IMR-90 (cell line): ENCODE measurements at regions of chr1 and their contacts with region 1.

Region 1: GRCh38 chr1:154442006-154442740 is 37.0 kb downstream of the IL6R start:
- DNase-seq: peak; percentile 64
- ATAC-seq: peak; percentile 5; the same call in 1 of the 2 replicates
- H3K4me3 ChIP-seq: no peak overlapping the region
- H3K27ac ChIP-seq: no peak overlapping the region
- H3K4me1 ChIP-seq: peaks cover 23% of the 10 kb centered on the region
- H3K27me3 ChIP-seq: peaks cover 17% of the 10 kb centered on the region
- CTCF ChIP-seq: 0 out of 2 replicates have a peak, but pooled peaks have one; percentile 22
- POLR2A ChIP-seq: no peak
- RAD21 ChIP-seq: no peak

Region 2: DNA sequence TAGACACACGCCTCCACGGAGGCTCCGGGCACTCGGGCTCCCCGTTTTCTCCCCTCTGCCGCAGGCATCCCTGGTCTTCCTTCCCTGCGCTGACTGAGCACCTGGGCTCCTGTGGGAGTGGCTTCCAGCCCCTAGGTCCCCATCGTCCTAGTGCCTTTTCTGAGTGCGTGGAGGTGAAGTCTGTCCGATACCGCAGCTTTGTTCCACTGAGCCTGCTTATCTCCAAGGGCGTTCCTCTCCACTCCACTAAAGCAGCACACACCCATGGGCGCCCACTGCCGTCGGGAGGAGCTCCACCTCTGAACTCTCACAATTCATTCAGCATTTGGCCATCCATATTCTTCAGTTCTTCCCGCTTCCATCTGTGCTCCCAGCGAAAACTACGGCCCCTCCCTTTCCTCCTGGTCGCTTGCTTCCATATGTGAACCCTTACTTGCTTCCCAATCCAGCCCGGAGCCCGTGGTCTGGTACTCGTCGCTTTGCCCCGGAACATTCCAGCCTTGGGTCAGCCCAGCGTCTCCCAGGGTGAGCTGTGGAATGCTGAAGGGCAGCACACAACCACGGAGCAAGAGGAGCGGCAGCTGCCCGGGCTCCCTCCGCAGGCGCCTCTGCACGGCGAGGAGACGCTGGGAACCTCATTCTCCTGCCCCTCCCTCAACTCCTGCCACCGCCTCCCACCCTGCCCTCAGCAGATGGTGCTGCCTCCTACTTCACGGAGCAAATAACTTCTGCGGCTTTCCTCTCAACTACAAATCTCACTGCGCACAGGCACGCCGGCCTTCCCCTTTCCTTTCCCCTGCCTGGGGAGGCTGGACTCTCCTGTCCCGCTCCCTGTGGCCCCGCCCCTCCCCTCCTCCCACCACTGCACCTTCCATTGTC is 89.4 kb before region 1 on chr1:
- CTCF ChIA-PET with region 1: no interaction called
- POLR2A ChIA-PET with region 1: no interaction called
- dilution Hi-C with region 1: no loop called
- in situ Hi-C with region 1: no loop called
- intact Hi-C with region 1: loop called (anchors 5 kb)
- DNase-seq: peak; percentile 31
- ATAC-seq: peak; percentile 78
- H3K4me3 ChIP-seq: peak overlapping the region; percentile 4; the same call in 1 of the 2 replicates
- H3K27ac ChIP-seq: peak overlapping the region; percentile 26; the same call in 1 of the 2 replicates
- H3K4me1 ChIP-seq: peaks cover 10% of the 10 kb centered on the region; the same call in 1 of the 2 replicates
- H3K27me3 ChIP-seq: peaks cover 2% of the 10 kb centered on the region
- CTCF ChIP-seq: no peak
- POLR2A ChIP-seq: no peak
- RAD21 ChIP-seq: no peak

Region 3: GRCh38 chr1:154431586-154432373 is 10.4 kb before region 1 on chr1:
- CTCF ChIA-PET with region 1: no interaction called
- POLR2A ChIA-PET with region 1: no interaction called
- dilution Hi-C with region 1: no loop called
- in situ Hi-C with region 1: no loop called
- intact Hi-C with region 1: loop called (anchors 1 kb)
- DNase-seq: peak; percentile 99
- ATAC-seq: peak; percentile 85
- H3K4me3 ChIP-seq: no peak overlapping the region
- H3K27ac ChIP-seq: peak overlapping the region; percentile 4; the same call in 1 of the 2 replicates
- H3K4me1 ChIP-seq: peaks cover 26% of the 10 kb centered on the region
- H3K27me3 ChIP-seq: 0 out of 2 replicates have a peak, but pooled peaks cover 4% of the 10 kb centered on the region
- CTCF ChIP-seq: no peak
- POLR2A ChIP-seq: no peak
- RAD21 ChIP-seq: peak; percentile 15; the same call in 1 of the 2 replicates

Region 4: DNA sequence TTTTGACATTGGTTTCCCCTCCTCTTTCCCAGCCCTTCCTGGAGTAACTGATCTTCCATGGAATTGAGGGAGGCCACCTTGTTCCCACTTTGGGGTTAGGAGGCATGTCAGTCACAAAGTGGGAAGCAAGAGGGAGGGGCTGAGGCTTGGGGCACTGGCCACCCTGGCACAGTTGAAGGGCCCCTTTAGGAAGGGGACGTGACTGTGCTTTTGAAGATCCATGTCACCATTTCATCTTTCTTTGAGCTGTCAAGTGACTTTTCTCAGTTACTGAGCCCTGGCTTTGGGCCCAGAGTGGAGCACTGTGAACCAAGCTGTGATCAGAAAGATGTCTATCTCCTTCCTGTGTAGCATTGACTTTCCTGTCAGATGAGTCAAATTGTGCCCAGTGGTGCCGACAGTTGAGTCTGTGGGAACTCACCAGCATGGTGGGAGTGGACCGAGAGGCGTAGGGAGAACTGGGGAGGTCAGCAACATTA is 21.4 kb after region 1 on chr1:
- CTCF ChIA-PET with region 1: interaction called, 4 read pairs
- POLR2A ChIA-PET with region 1: no interaction called
- dilution Hi-C with region 1: no loop called
- in situ Hi-C with region 1: no loop called
- intact Hi-C with region 1: loop called (anchors 2 kb)
- DNase-seq: no peak
- ATAC-seq: peak; percentile 40
- H3K4me3 ChIP-seq: no peak overlapping the region
- H3K27ac ChIP-seq: peak overlapping the region; percentile 86; the same call in 1 of the 2 replicates
- H3K4me1 ChIP-seq: peaks cover 8% of the 10 kb centered on the region
- H3K27me3 ChIP-seq: no peaks in the 10 kb centered on the region; the same call in 1 of the 2 replicates
- CTCF ChIP-seq: no peak
- POLR2A ChIP-seq: no peak
- RAD21 ChIP-seq: no peak

Region 5: GRCh38 chr1:155063550-155064110 is 621.5 kb after region 1 on chr1 and contains the start of gene EFNA4:
- CTCF ChIA-PET with region 1: no interaction called
- POLR2A ChIA-PET with region 1: no interaction called
- dilution Hi-C with region 1: no loop called
- in situ Hi-C with region 1: no loop called
- intact Hi-C with region 1: no loop called
- DNase-seq: peak; percentile 80
- ATAC-seq: peak; percentile 91
- H3K4me3 ChIP-seq: peak within 1 kb of the TSS; percentile 90
- H3K27ac ChIP-seq: peak within 1 kb of the TSS; percentile 44
- H3K4me1 ChIP-seq: peaks cover 4% of the 10 kb centered on the region; the same call in 1 of the 2 replicates
- H3K27me3 ChIP-seq: no peaks in the 10 kb centered on the region
- CTCF ChIP-seq: no peak
- POLR2A ChIP-seq: peak; percentile 53; the same call in 1 of the 2 replicates
- RAD21 ChIP-seq: no peak
- total RNA-seq, gene EFNA4: 3.3 and 3.8 TPM in 2 replicates